ENCODE measurements at regions of chr5 and their contacts with region 1.

Region 1: GRCh38 chr5:72366324-72366976 is 46.3 kb downstream of the PTCD2 start:
- DNase-seq: peak; percentile 36
- ATAC-seq: peak; percentile 64
- H3K4me3 Mint-ChIP-seq: no peak overlapping the region
- H3K27ac Mint-ChIP-seq: no peak overlapping the region
- H3K4me1 Mint-ChIP-seq: peaks cover 50% of the 10 kb centered on the region
- H3K27me3 Mint-ChIP-seq: no peaks in the 10 kb centered on the region
- CTCF ChIP-seq: peak; percentile 36

Region 2: GRCh38 chr5:72149742-72150141 is 216.7 kb before region 1 on chr5:
- CTCF ChIA-PET with region 1: no interaction called
- POLR2A ChIA-PET with region 1: no interaction called
- DNase-seq: no peak
- ATAC-seq: no peak
- H3K4me3 Mint-ChIP-seq: no peak overlapping the region
- H3K27ac Mint-ChIP-seq: no peak overlapping the region; the same call in 1 of the 2 replicates
- H3K4me1 Mint-ChIP-seq: peaks cover 61% of the 10 kb centered on the region
- H3K27me3 Mint-ChIP-seq: no peaks in the 10 kb centered on the region
- CTCF ChIP-seq: no peak

Region 3: DNA sequence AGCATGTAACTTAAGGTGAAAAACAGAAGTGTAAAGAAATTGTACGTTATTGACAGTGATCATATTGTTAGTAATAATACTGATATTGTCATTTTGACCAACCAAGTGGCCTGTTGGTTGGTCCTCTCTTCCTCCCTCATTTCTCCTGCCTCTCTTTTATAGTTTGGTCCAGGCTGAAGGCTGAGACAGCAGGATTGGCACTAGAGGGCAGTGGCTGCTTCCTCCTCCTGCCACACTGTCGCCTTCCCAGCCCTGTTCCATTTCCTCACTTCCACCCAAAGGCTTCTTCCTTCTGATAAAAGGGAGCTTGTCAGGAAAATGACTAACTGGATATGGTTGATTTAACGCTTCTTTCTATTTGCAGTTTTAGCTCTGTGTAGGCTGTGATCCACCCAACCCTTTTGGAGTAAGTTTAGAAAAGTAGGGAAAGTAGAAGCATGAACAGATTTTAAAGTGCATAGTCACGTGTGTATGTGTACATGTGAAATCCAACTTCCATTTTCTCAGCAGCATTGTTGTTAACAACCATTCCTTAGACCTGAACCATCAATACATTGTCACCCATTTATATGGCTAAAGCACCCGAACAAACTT is 10.6 kb before region 1 on chr5:
- CTCF ChIA-PET with region 1: interaction called, 16 read pairs
- POLR2A ChIA-PET with region 1: no interaction called
- DNase-seq: peak; percentile 21
- ATAC-seq: peak; percentile 97
- H3K4me3 Mint-ChIP-seq: no peak overlapping the region
- H3K27ac Mint-ChIP-seq: no peak overlapping the region
- H3K4me1 Mint-ChIP-seq: no peaks in the 10 kb centered on the region
- H3K27me3 Mint-ChIP-seq: no peaks in the 10 kb centered on the region
- CTCF ChIP-seq: no peak

Region 4: GRCh38 chr5:72451741-72452505 is 85.5 kb after region 1 on chr5:
- CTCF ChIA-PET with region 1: no interaction called
- POLR2A ChIA-PET with region 1: no interaction called
- DNase-seq: no peak
- ATAC-seq: no peak; the same call in none of the 2 replicates
- H3K4me3 Mint-ChIP-seq: no peak overlapping the region
- H3K27ac Mint-ChIP-seq: no peak overlapping the region
- H3K4me1 Mint-ChIP-seq: peaks cover 10% of the 10 kb centered on the region
- H3K27me3 Mint-ChIP-seq: peaks cover 3% of the 10 kb centered on the region; the same call in 1 of the 2 replicates
- CTCF ChIP-seq: no peak